Adrenal gland (tissue), 19 donors: ENCODE measurements at regions of chr1 and their contacts with region 1.

Region 1: DNA sequence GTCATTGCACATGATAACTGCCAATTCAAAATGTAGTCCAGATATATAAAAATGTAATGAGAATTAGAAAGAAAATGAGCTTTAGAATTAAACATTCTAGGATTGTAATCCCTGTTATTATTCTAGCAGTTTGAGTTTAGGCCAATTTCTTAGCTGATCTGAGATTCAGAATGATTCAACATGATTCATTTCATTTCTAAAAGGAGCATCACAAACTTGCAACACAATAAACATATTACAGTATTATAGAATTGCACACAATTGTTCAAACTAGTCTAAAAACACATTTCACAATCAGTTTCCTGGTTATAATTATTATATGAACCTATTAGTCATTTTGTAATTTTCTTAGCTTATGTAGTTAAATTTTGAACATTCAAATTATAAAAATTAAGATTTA is 43.3 kb upstream of the TSHB start:
- DNase-seq: no peak
- H3K4me3 ChIP-seq: no peak overlapping the region
- H3K27ac ChIP-seq: no peak overlapping the region
- H3K4me1 ChIP-seq: no peaks in the 10 kb centered on the region
- H3K27me3 ChIP-seq: peaks cover 5% of the 10 kb centered on the region
- CTCF ChIP-seq: no peak
- POLR2A ChIP-seq: no peak

Region 2: DNA sequence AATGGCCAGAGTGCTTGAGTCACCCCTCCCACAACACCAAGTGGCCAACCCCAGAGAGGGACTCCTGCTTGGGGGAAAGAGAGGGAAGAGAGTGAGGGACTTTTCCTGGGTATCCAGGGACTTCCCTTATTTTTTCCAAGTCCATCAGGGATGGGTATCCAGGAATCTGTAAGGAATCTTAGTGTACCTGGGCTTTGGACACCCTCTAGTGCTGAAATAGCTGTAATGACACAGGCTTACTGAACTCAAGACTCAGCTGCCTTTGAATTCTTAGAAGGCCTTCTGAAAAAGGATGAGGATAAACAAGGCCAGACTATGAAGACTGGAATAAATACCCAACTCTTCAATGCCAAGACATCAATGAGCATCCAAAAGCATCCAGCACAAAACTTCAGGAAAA is 55.4 kb after region 1 on chr1:
- intact Hi-C with region 1: no loop called
- DNase-seq: no peak
- H3K4me3 ChIP-seq: no peak overlapping the region
- H3K27ac ChIP-seq: no peak overlapping the region
- H3K4me1 ChIP-seq: no peaks in the 10 kb centered on the region
- H3K27me3 ChIP-seq: no peaks in the 10 kb centered on the region
- CTCF ChIP-seq: no peak
- POLR2A ChIP-seq: no peak

Region 3: DNA sequence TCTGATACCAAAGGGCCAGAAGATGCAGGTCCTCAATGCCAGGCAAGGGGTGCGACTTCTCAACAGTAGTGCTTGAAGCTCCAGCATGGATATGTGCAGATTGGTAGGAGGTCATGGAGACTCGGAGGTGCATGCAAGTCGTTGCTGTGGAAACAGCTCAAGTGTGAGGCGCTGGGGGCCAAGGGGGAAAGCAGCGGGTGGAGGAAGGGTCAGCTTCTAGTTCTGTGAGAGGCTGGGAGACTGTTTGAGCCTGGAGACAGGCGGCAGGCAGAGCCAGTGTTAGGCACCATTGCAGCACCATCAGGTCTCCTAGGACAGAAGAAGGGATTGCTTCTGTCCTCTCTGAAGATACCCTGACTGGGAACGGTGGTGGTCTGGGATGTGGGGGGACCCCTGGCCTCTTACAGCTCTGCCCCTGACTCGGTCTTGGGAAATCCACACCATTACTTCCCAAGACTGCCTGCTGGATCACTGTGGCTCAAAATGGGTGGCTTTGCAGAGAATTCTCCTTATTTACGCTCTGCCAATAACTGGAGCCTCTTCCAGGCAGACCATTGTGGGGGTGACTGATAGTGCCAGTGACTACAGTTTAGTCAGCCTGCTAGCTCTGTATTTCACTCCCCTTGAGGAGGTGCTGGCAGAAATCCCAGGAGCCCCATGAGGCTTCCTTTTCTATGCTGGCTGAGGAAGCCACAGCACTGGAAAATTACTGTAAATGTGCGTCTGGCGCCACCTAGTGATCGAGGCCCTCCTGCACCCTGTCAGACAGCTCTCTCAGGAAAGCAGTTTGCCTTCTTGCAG is 609.2 kb after region 1 on chr1:
- intact Hi-C with region 1: loop called in 1 of 2 experiments (anchors 10 kb)
- DNase-seq: peak; percentile 82 to 95 (median 90)
- H3K4me3 ChIP-seq: no peak overlapping the region
- H3K27ac ChIP-seq: peak overlapping the region in 1 of 5 donors; percentile 10
- H3K4me1 ChIP-seq: peaks cover 0 to 4% of the 10 kb centered on the region in 2 donors
- H3K27me3 ChIP-seq: no peaks in the 10 kb centered on the region
- CTCF ChIP-seq: peak; percentile 81 to 93 (median 90)
- POLR2A ChIP-seq: no peak